GM10248 (cell line): ENCODE measurements at regions of chr1 and their contacts with region 1.

Region 1: DNA sequence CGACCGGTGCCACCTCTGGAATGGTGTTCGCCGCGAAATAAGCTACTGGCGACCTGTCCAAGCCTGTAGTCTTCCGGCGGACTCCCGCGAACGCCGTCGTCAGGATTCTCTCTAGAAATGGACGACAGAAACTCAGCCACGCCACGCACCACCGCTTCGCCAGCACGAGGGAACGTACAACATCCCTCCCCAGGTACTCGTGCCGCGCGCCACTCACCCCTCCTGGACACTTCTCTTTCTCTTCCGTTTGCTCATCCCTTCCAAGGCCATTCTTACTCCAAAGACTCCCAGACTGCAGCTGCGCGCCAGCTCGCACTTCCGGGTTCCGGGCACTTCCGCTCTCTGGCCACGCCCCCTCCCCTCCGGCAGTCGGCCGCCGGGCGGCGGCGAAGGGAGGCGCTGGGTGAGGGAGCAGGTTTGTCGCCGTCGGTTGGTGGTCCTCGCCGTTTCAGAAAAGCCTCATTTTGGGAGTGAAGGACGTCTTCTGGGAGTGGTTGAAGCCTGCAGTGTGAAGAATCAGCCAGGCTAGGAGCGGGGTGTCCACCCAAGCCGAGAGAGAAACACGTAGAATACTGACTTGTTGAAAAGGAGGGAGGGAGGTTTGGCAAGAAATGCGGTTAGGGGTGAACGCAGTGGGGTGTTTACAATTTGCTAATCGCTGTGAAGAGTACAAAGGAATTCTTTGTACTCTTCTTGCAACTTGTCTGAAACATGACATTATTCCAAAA is at the start of gene RBM34:
- DNase-seq: peak; percentile 94
- CTCF ChIP-seq: peak; percentile 3

Region 2: DNA sequence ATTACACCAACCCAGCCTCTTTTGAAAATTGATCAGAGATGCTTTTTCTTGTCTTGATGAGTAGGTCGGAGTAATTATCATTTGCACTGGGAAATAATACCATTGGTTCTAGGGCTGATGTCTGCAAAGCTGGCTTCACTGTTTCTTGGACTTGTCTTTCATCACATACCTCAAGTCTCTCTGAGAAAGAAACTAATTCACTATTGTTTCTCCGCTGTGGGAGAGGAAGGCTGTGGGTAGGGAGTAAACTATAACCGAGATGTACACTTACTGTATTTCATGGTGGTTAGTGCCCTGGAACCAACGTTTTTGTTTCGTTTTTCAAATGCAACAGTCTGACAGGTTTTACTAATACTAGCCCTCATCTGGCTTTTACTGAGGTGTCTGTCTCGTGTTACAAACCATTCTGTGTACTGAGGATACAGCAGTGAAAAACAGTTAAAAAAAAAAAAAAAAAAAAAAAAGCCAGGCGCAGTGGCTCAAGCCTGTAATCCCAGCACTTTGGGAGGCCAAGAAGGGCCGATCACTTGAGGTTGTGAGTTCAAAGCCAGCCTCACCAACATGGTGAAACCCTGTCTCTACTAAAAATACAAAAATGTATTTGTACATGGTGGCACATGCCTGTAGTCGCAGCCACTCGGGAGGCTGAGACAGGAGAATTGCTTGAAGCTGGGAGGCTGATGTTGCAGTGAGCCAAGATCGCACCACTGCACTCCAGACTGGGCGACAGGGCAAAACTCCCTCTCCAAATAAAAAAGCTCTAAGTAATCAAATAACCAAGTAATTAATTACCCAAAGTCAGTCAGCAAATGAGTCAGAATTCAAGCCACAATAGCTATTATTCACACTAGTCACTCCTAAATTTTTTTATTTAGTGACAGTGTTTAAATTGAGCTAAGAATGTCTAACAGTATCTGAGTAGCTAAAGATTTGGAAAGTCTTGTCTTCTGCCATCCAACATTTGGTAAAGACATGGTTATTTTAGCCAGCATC is 55.8 kb before region 1 on chr1:
- CTCF ChIA-PET with region 1: interaction called, 19 read pairs
- POLR2A ChIA-PET with region 1: no interaction called
- DNase-seq: peak; percentile 74
- CTCF ChIP-seq: no peak

Region 3: DNA sequence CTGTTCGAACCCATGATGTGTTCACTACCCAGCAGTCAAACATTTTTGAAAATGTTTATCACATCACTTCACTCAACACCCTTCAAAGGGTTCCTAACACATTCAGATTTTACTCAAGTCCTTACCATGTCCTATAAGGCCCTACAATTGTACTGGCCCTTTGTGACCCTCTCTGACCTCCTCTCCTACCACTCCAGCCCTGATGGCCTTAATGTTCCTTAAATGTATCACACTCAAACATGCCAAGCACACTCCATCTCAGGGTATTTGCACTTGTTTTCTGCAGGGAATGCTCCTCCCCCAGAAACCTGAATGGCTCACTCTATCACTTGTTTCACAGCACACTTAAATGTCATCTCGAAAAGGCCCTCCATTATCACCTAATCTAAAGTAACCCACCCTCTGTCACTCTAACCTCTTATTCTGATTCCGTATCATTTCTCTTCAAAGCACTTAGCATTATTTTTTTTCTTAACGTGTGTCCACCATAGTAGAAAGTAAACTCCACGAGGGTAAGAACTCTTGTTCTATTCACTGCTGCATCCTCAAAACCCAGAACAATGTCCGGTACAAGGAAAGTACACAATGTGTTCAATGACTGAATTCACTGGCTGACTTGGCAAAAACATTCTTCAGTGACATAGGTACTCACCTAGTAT is 159.5 kb after region 1 on chr1:
- CTCF ChIA-PET with region 1: no interaction called
- POLR2A ChIA-PET with region 1: no interaction called
- DNase-seq: no peak
- CTCF ChIP-seq: no peak